ENCODE measurements at regions of chr10 and their contacts with region 1.

Region 1: DNA sequence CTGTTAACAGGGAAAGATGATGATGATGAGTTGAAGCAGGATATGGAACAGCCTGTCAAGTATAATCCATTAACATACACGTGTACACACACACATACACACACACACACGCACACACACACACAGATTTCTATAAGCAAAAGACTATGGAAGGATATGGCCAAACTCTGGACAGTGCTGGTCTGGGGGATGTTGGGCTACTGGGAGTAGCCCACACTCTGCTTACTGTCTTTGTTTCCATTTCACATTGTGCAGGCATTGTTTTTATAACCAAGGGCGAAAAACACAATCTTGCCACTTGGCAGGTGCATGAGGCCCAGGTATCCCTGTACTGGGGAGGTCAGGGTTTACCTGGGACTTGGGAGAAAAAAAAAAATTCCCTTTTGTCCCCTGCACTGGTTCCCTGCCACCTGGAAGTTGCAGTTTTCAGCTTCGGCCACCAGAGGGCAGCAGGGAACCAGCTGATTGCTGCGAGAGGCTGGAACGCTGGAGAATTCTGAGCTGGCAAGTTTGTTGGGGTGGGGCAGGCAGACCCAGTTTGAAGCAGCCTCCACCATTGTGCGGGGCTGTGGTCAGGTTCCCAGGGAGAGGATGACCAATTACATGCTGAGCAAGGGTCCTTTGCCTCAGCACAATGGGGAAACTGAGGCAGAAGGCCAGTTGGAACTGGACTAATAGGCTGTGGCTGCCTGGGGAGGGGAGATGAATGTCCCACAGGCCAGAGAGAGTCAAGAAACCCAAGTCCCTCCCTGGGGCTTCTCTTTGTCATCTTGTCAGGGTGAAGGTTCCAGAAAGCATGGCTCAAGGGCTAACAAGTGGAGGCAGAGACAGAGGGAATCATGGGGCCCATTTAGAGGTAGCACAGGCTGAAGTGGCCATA is 27.3 kb downstream of the PPIF start:
- DNase-seq: peak; percentile 63 to 87
- H3K4me3 ChIP-seq: no peak overlapping the region
- H3K27ac ChIP-seq: no peak overlapping the region
- H3K4me1 ChIP-seq: 0 out of 2 replicates have a peak, but pooled peaks cover 10% of the 10 kb centered on the region
- H3K27me3 ChIP-seq: no peaks in the 10 kb centered on the region
- CTCF ChIP-seq: peak; percentile 100

Region 2: DNA sequence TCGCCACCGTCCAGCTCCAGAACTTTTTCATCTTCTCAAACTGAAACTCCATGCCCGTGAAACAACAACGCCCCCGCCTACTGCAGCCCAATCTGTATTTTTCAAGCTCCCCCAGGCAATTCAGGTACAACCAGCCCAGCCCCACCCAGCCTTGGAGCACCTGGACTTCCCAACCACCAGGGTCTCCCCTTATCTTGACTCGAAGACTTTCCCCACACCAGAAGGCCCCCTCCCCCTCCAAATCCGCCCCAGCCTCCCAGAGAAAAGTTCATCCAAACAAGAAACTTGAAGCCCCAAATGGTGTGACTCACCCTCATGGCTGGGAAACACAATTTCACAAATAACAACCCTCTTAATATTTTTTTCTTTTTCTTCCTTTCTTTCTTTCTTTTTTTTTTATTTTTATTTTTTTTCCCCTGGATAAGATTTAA is 60.3 kb after region 1 on chr10:
- CTCF ChIA-PET with region 1: interaction called, 3 read pairs
- POLR2A ChIA-PET with region 1: no interaction called
- intact Hi-C with region 1: loop called (anchors 2 kb)
- DNase-seq: peak; percentile 69 to 74
- H3K4me3 ChIP-seq: peak overlapping the region; percentile 43; the same call in 1 of the 2 replicates
- H3K27ac ChIP-seq: peak overlapping the region; percentile 93
- H3K4me1 ChIP-seq: peaks cover 53% of the 10 kb centered on the region
- H3K27me3 ChIP-seq: no peaks in the 10 kb centered on the region
- CTCF ChIP-seq: no peak

Region 3: DNA sequence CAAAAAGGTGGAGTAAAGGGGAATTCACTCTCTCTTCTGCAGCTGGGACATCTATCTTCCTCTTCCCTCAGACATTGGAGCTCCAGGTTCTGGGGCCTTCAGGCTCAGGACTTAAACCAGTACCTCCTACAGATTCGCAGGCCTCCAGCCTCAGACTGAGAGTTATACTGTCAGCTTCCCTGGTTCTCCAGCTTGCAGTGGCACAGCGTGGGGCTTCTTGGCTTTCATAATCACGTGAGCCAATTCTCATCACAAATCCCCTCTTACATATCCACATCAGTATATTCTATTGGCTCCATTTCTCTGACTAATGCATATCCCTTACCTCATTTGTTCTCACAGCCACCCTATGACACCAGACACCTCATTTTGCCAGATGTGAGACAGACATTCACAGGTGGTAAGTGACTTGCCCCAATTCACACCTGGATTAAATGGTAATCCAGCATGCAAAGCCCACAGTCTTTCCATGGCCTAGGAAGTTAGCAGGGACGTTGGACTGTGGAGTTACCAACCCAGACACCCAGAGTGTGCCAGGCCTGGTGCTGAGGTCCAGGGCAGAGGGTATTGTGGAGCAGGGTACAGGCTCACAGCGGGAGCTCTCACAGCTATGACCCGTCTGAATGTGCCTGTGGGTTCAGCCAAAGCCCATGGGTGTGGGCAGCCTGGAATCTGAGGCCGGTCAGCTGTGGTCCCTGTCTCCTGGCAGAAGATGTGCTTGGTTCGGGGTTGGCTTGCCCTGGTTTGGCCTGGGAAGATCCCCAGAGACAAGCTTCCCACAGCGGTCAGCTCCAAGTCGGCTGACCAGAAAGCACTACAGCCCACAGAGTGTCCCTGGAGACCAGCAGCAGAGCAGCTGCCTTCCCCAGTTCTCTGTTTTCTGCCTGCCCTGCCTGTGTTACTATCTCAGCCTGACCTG is 89.3 kb after region 1 on chr10:
- CTCF ChIA-PET with region 1: interaction called, 4 read pairs
- POLR2A ChIA-PET with region 1: no interaction called
- intact Hi-C with region 1: loop called (anchors 1 kb)
- DNase-seq: no peak
- H3K4me3 ChIP-seq: no peak overlapping the region
- H3K27ac ChIP-seq: no peak overlapping the region
- H3K4me1 ChIP-seq: no peaks in the 10 kb centered on the region
- H3K27me3 ChIP-seq: 0 out of 2 replicates have a peak, but pooled peaks cover 9% of the 10 kb centered on the region
- CTCF ChIP-seq: no peak

Region 4: DNA sequence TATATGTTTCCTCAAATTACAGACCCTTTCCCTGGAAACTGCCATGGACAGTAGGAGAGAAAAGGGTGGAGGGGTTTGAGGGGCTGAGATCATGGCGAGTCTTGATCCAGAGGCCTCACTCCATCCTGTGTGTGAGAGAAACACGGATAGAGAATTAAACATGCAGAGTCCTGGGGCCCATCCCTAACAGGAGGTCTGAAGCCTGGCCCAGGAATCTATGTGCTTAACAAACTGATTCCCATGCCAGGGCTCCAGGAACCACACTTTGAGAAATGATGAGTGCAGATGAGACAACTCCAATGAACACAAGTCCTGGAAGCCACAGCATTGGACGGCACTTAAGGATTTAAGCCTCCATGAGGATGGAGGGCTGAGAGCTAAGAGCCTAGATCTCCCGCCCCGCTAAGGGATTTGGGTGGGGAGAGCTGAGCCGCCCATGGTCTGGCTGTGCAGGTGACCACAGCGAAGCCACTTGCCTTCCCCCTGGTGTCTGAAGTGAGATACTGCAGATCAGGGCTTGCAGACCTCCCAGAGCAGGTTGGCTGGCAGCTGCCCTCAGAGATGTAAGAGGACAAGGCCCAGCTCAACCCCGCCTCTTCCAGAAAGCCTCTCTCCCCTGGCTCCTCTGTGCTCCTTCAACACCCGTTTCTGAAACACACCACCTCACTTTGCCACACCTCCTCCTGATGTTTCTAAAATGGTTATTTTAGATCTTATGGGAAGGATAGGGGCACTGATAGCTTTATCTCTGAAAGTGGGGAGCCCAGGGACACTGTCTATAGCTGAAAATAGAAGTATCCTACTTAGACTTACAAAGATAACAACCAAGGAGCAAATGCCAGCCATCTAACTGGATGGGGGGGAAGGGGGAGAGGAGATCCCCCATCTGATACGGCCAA is 113.0 kb after region 1 on chr10:
- CTCF ChIA-PET with region 1: interaction called, 12 read pairs
- POLR2A ChIA-PET with region 1: no interaction called
- intact Hi-C with region 1: loop called (anchors 5 kb)
- DNase-seq: peak in 1 of 2 experiments; percentile 57
- H3K4me3 ChIP-seq: no peak overlapping the region
- H3K27ac ChIP-seq: peak overlapping the region; percentile 11; the same call in 1 of the 2 replicates
- H3K4me1 ChIP-seq: peaks cover 15% of the 10 kb centered on the region
- H3K27me3 ChIP-seq: no peaks in the 10 kb centered on the region
- CTCF ChIP-seq: peak; percentile 70

Region 5: GRCh38 chr10:79502561-79503309 is 128.2 kb after region 1 on chr10:
- CTCF ChIA-PET with region 1: no interaction called
- POLR2A ChIA-PET with region 1: no interaction called
- intact Hi-C with region 1: loop called (anchors 1 kb)
- DNase-seq: peak in 1 of 2 experiments; percentile 71
- H3K4me3 ChIP-seq: no peak overlapping the region
- H3K27ac ChIP-seq: no peak overlapping the region
- H3K4me1 ChIP-seq: no peaks in the 10 kb centered on the region
- H3K27me3 ChIP-seq: peaks cover 55% of the 10 kb centered on the region
- CTCF ChIP-seq: peak; percentile 77

Region 6: GRCh38 chr10:79929409-79929904 is 554.9 kb after region 1 on chr10:
- CTCF ChIA-PET with region 1: no interaction called
- POLR2A ChIA-PET with region 1: no interaction called
- intact Hi-C with region 1: loop called (anchors 5 kb)
- DNase-seq: peak in 1 of 2 experiments; percentile 66
- H3K4me3 ChIP-seq: no peak overlapping the region
- H3K27ac ChIP-seq: no peak overlapping the region
- H3K4me1 ChIP-seq: no peaks in the 10 kb centered on the region
- H3K27me3 ChIP-seq: peaks cover 8% of the 10 kb centered on the region; the same call in 1 of the 2 replicates
- CTCF ChIP-seq: peak; percentile 89